Activated T-helper 1 cell treated with anti-CD3 and anti-CD28 coated beads, Interleukin-12 subunit alpha, Interleukin-12 subunit beta, Interleukin-2, Interleukin-4 antibody, amounts not matched to agents 30 ng/mL and 10 ng/mL and 1 ng/mL, durations not matched to agents 14 hours and 24 hours and 36 hours (primary cell): ENCODE measurements at regions of chr19 and their contacts with region 1.

Region 1: GRCh38 chr19:36850559-36851442 is at the start of gene ZNF345:
- DNase-seq: peak; percentile 81
- H3K4me3 Mint-ChIP-seq: no peak within 1 kb of the TSS
- H3K27ac Mint-ChIP-seq: no peak within 1 kb of the TSS
- H3K4me1 Mint-ChIP-seq: peaks cover 6% of the 10 kb centered on the region
- H3K27me3 Mint-ChIP-seq: no peaks in the 10 kb centered on the region
- total RNA-seq, gene ZNF345: 3.7 and 4.4 TPM in 2 replicates

Region 2: DNA sequence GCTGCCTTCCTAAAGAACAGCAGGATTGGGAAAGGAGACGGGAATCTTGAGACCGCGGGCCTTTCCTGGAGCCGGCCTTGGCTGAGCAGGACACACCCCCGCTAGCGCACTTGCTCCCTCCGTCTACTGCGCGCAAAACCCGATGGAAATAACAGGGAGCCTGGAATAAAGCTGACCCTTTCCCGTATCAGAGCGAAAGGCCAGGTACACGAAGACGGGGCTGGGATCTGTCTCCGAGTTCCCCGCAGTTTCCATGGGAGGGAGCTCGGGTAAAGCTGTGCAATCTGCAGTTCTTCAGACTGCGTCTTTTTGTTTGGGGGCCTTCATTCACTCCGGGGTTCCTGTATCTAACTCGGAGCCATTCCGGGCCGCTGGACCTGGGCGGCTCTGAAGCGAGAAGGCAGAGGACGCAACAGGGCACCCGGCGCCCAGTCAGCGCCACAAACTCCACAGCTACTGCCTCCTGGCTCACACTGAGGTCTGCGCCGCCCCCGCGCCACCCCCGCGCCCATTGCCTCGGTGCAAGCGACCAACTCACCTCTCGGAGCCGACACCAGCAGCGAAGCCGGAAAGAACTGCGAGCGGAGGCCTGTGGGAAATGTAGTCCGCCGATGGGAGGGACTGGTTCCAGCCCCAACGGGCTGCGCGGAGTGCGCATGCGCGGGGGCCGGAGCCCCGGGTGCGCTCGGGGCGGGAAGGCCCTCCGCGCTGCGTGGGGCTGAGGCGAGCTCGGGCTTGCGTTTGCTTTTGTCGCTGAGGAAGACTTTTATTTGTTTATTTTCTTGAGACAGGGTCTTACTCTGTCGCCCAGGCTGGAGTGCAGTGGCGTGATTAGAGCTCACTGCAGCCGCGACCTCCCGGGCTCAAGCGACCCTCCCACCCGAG is 471.9 kb before region 1 on chr19 and contains the start of gene ZFP14:
- intact Hi-C with region 1: loop called (anchors 1 kb)
- DNase-seq: peak; percentile 91
- H3K4me3 Mint-ChIP-seq: peak within 1 kb of the TSS; percentile 86
- H3K27ac Mint-ChIP-seq: peak within 1 kb of the TSS; percentile 73
- H3K4me1 Mint-ChIP-seq: peaks cover 13% of the 10 kb centered on the region
- H3K27me3 Mint-ChIP-seq: no peaks in the 10 kb centered on the region
- total RNA-seq, gene ZFP14: 0.83 and 1.7 TPM in 2 replicates

Region 3: DNA sequence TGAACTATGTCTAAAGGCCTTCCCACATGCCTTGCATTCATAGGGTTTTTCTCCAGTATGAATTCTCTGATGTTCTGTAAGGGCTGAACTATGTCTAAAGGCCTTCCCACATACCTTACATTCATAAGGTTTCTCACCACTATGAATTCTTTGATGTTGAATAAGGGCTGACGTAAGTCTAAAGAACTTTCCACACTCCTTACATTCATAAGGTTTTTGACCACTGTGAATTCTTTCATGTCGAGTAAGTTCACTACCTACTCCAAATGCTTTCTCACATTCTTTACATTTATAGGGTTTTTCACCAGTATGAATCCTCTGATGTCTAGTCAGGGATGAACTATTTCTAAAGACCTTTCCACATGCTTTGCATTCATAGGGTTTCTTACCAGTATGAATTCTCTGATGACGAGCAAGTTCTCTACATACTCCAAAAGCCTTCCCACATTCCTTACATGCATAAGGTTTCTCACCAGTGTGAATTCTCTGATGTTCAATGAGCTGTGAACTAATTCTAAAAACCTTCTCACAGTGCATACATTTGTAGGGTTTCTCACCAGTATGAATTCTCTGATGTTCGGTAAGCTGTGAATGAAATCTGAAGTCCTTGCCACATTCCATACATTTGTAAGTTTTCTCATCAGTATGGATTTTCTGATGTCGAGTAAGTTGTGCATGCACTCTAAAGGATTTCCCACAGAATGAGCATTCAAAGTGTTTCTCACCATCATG is 303.6 kb before region 1 on chr19:
- intact Hi-C with region 1: no loop called
- DNase-seq: no peak
- H3K4me3 Mint-ChIP-seq: no peak overlapping the region
- H3K27ac Mint-ChIP-seq: no peak overlapping the region
- H3K4me1 Mint-ChIP-seq: no peaks in the 10 kb centered on the region
- H3K27me3 Mint-ChIP-seq: no peaks in the 10 kb centered on the region

Region 4: GRCh38 chr19:36605101-36605876 is 245.5 kb before region 1 on chr19 and contains the start of gene ZNF382:
- intact Hi-C with region 1: loop called (anchors 1 kb)
- DNase-seq: peak; percentile 85
- H3K4me3 Mint-ChIP-seq: peak within 1 kb of the TSS; percentile 90
- H3K27ac Mint-ChIP-seq: peak within 1 kb of the TSS; percentile 95
- H3K4me1 Mint-ChIP-seq: peaks cover 26% of the 10 kb centered on the region
- H3K27me3 Mint-ChIP-seq: no peaks in the 10 kb centered on the region
- total RNA-seq, gene ZNF382: 10.2 and 10.8 TPM in 2 replicates

Region 5: GRCh38 chr19:36796076-36796992 is 54.5 kb before region 1 on chr19:
- intact Hi-C with region 1: loop called (anchors 1 kb)
- DNase-seq: no peak
- H3K4me3 Mint-ChIP-seq: peak overlapping the region; percentile 85
- H3K27ac Mint-ChIP-seq: no peak overlapping the region
- H3K4me1 Mint-ChIP-seq: no peaks in the 10 kb centered on the region
- H3K27me3 Mint-ChIP-seq: no peaks in the 10 kb centered on the region

Region 6: GRCh38 chr19:36876993-36877938 is 26.5 kb after region 1 on chr19:
- intact Hi-C with region 1: no loop called
- DNase-seq: no peak
- H3K4me3 Mint-ChIP-seq: no peak overlapping the region
- H3K27ac Mint-ChIP-seq: no peak overlapping the region
- H3K4me1 Mint-ChIP-seq: no peaks in the 10 kb centered on the region
- H3K27me3 Mint-ChIP-seq: no peaks in the 10 kb centered on the region

Region 7: DNA sequence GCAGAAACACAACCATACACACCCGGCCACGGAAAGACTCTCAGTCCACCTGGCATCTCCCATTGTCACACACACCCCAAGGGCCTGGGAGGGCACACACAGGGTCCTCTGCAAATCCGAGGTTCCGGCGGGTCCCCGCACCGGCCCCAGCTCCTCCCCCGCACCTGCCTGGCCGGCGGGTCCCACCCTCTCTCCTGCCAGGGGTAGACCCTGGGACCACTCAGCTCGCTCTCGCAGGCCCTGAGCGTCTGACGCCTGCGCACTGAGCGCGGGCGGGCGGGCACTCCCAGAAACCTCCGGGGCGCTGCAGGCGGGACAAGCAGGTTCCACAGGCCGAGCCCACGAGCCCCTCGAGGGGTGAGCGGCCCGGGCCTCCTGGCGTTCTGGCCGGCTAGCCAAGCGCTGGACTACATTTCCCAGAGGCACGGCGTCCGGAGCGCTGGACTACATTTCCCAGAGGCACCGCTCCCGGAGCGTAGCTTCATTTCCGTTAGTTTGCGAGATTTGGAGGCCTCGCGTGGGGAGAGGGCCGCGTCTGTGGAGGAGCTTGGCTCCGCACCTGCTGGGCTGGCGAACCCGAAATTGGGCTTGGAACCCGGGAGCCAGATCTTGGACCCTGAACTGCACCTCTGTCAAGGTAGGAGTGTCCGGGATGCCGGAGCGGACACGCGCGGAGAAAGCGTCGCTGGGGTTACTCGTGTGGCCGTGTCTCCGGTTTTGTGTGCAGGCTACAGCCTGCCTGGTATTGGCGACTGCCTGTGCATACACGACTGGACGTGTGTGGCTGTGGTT is 227.3 kb after region 1 on chr19 and contains the start of gene ZNF420:
- intact Hi-C with region 1: loop called (anchors 1 kb)
- DNase-seq: peak; percentile 85
- H3K4me3 Mint-ChIP-seq: peak within 1 kb of the TSS; percentile 93
- H3K27ac Mint-ChIP-seq: peak within 1 kb of the TSS; percentile 90
- H3K4me1 Mint-ChIP-seq: peaks cover 21% of the 10 kb centered on the region
- H3K27me3 Mint-ChIP-seq: no peaks in the 10 kb centered on the region
- total RNA-seq, gene ZNF420: 5.9 and 9.1 TPM in 2 replicates

Region 8: GRCh38 chr19:37466798-37467607 is 616.2 kb after region 1 on chr19 and contains the start of gene ZNF569:
- intact Hi-C with region 1: loop called (anchors 1 kb)
- DNase-seq: peak; percentile 85
- H3K4me3 Mint-ChIP-seq: peak within 1 kb of the TSS; percentile 92
- H3K27ac Mint-ChIP-seq: peak within 1 kb of the TSS; percentile 93
- H3K4me1 Mint-ChIP-seq: peaks cover 27% of the 10 kb centered on the region
- H3K27me3 Mint-ChIP-seq: no peaks in the 10 kb centered on the region
- total RNA-seq, gene ZNF569: 2.7 and 3.7 TPM in 2 replicates